Activated CD4-positive, alpha-beta T cell treated with anti-CD3 and anti-CD28 coated beads for 36 hours (primary cell): ENCODE measurements at regions of chr10 and their contacts with region 1.

Region 1: GRCh38 chr10:98758463-98758862 is 311.7 kb upstream of the HPS1 start:
- DNase-seq: no peak
- ATAC-seq: no peak
- H3K4me3 Mint-ChIP-seq: no peak overlapping the region
- H3K27ac Mint-ChIP-seq: no peak overlapping the region
- H3K4me1 Mint-ChIP-seq: no peaks in the 10 kb centered on the region
- H3K27me3 Mint-ChIP-seq: peaks cover 4% of the 10 kb centered on the region

Region 2: DNA sequence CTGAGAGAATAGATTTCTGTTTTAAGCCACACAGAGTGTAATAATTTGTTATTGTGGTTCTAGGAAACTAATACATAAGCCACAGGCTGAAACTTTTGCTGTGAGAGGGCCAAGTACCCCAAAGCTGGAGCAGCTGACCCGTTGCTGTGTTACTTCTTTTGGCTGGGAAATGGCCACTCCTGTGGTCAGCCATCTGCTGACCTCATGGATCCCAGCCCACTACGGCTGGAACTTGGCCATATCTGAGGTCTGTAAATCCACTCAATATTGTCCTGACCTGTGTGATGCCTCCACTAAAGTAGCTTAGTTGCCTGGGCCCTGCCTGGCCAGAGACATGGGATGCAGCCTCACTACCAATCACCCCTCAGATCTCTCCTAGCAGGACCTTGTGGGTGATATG is 473.0 kb before region 1 on chr10:
- CTCF ChIA-PET with region 1: no interaction called
- POLR2A ChIA-PET with region 1: interaction called, 10 read pairs
- intact Hi-C with region 1: no loop called
- DNase-seq: no peak
- ATAC-seq: no peak
- H3K4me3 Mint-ChIP-seq: no peak overlapping the region
- H3K27ac Mint-ChIP-seq: no peak overlapping the region
- H3K4me1 Mint-ChIP-seq: no peaks in the 10 kb centered on the region
- H3K27me3 Mint-ChIP-seq: peaks cover 10% of the 10 kb centered on the region